Astrocyte of the cerebellum (primary cell): ENCODE measurements at regions of chr10 and their contacts with region 1.

Region 1: DNA sequence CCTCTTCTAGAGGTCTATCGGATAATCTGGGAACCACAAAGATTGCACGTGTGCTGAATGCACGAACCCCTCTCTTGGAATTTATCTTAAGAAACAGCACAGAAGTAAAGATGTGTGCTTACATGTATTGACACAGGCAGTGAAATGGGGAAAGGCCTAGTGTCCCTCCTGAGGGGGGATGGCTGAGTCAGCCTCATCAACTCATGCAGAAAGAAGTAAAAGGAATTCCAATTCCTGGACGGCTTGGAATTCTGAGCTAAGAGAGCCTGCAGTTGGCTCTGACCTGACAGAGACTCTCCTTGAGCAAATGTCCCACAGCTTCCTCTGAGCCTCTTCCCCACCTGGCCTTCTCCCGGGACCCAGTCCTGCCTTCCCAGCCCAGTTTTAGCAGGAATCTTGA is 542.3 kb upstream of the ADARB2 start:
- DNase-seq: peak; percentile 2
- H3K4me3 ChIP-seq: no peak overlapping the region
- CTCF ChIP-seq: no peak

Region 2: GRCh38 chr10:2340831-2341647 is 61.4 kb after region 1 on chr10:
- in situ Hi-C with region 1: loop called (anchors 5 kb)
- DNase-seq: peak; percentile 1
- H3K4me3 ChIP-seq: peak overlapping the region; percentile 9
- CTCF ChIP-seq: no peak